ENCODE measurements at regions of chr21 and their contacts with region 1.

Region 1: GRCh38 chr21:25895565-25896205 is 160.9 kb downstream of the GABPA start:
- DNase-seq: peak; percentile 55
- H3K4me3 Mint-ChIP-seq: no peak overlapping the region
- H3K27ac Mint-ChIP-seq: no peak overlapping the region
- H3K4me1 Mint-ChIP-seq: peaks cover 9% of the 10 kb centered on the region
- H3K27me3 Mint-ChIP-seq: no peaks in the 10 kb centered on the region
- CTCF ChIP-seq: peak; percentile 50

Region 2: GRCh38 chr21:25767921-25768320 is 127.8 kb before region 1 on chr21:
- CTCF ChIA-PET with region 1: no interaction called
- POLR2A ChIA-PET with region 1: no interaction called
- intact Hi-C with region 1: no loop called
- DNase-seq: no peak
- H3K4me3 Mint-ChIP-seq: no peak overlapping the region
- H3K27ac Mint-ChIP-seq: no peak overlapping the region
- H3K4me1 Mint-ChIP-seq: no peaks in the 10 kb centered on the region
- H3K27me3 Mint-ChIP-seq: no peaks in the 10 kb centered on the region
- CTCF ChIP-seq: no peak

Region 3: DNA sequence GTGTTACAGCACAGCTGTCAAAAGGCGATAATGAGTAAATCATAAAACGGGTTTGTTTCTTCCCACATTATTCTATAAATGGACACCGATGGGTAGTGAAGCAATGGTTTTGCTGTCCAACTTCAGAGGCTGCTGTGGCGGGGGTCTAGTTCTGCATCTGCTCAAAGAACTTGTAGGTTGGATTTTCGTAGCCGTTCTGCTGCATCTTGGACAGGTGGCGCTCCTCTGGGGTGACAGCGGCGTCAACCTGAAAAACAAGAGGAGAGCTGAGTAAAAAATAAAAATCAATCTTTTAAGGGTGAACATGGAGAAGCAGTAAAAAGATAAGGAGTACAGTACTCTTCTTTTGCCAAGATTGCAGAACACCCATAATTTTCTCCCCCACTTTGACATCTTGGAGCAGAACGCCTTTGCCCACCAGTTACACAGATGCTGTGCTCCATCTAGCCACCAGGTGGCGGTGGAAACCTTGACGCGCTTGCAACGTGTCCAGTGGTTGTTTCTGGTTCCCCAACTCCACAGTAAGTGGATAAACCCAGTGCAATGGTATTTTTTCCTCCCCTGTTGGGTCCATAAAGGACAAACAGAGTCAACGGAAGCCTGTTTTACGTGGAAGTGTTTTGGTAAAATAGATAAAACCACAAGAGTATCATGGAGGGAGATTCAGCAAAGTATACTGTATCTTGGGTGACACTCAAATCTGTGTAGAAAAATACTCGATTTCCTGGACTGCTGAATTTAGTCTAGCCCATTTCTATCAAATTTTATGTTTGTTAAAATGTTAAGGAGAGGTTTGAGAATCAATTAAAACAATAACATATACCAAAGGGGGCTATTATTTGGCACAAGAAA is 13.9 kb before region 1 on chr21:
- CTCF ChIA-PET with region 1: interaction called, 26 read pairs
- POLR2A ChIA-PET with region 1: interaction called, 3 read pairs
- intact Hi-C with region 1: no loop called
- DNase-seq: peak; percentile 67
- H3K4me3 Mint-ChIP-seq: no peak overlapping the region
- H3K27ac Mint-ChIP-seq: no peak overlapping the region
- H3K4me1 Mint-ChIP-seq: no peaks in the 10 kb centered on the region
- H3K27me3 Mint-ChIP-seq: no peaks in the 10 kb centered on the region
- CTCF ChIP-seq: peak; percentile 88

Region 4: DNA sequence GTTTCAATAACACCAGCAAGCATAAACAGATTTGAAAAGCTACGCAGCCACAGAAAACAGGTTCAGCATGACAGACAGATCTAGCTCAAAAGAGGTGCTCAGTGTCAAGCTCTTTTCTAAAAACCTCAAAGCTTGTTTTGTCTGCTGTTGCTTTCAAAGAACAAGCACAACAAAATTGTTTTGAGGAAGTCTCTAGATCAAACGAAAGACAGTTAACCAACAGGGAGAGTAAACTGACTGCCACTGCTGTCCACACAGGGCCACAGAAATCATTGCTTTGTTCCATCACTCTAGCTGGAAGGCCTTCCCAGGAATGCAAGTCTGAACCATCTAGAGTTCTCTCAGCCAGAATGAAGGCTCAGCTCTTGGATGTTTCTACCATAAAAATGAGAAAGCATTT is 262.1 kb after region 1 on chr21:
- CTCF ChIA-PET with region 1: no interaction called
- POLR2A ChIA-PET with region 1: no interaction called
- intact Hi-C with region 1: no loop called
- DNase-seq: no peak
- H3K4me3 Mint-ChIP-seq: no peak overlapping the region
- H3K27ac Mint-ChIP-seq: no peak overlapping the region
- H3K4me1 Mint-ChIP-seq: peaks cover 27% of the 10 kb centered on the region
- H3K27me3 Mint-ChIP-seq: no peaks in the 10 kb centered on the region
- CTCF ChIP-seq: no peak